MCF 10A (cell line): ENCODE measurements at regions of chr5 and their contacts with region 1.

Region 1: GRCh38 chr5:134370871-134371833 is at the start of gene UBE2B:
- DNase-seq: peak; percentile 100
- H3K4me3 Mint-ChIP-seq: peak within 1 kb of the TSS; percentile 99
- H3K27ac Mint-ChIP-seq: peak within 1 kb of the TSS; percentile 99
- H3K4me1 Mint-ChIP-seq: peaks cover 28% of the 10 kb centered on the region
- H3K27me3 Mint-ChIP-seq: no peaks in the 10 kb centered on the region
- CTCF ChIP-seq: no peak
- total RNA-seq, gene UBE2B: 178 and 186 TPM in 2 replicates

Region 2: GRCh38 chr5:134394932-134395331 is 23.8 kb after region 1 on chr5:
- CTCF ChIA-PET with region 1: interaction called, 6 read pairs
- POLR2A ChIA-PET with region 1: interaction called, 23 read pairs
- intact Hi-C with region 1: no loop called
- DNase-seq: no peak
- H3K4me3 Mint-ChIP-seq: no peak overlapping the region
- H3K27ac Mint-ChIP-seq: no peak overlapping the region
- H3K4me1 Mint-ChIP-seq: peaks cover 12% of the 10 kb centered on the region
- H3K27me3 Mint-ChIP-seq: no peaks in the 10 kb centered on the region
- CTCF ChIP-seq: no peak

Region 3: GRCh38 chr5:134451936-134452505 is 80.9 kb after region 1 on chr5:
- CTCF ChIA-PET with region 1: no interaction called
- POLR2A ChIA-PET with region 1: interaction called, 13 read pairs
- intact Hi-C with region 1: no loop called
- DNase-seq: peak; percentile 94
- H3K4me3 Mint-ChIP-seq: no peak overlapping the region
- H3K27ac Mint-ChIP-seq: no peak overlapping the region
- H3K4me1 Mint-ChIP-seq: peaks cover 24% of the 10 kb centered on the region
- H3K27me3 Mint-ChIP-seq: no peaks in the 10 kb centered on the region
- CTCF ChIP-seq: no peak

Region 4: GRCh38 chr5:134503088-134503946 is 132.2 kb after region 1 on chr5:
- CTCF ChIA-PET with region 1: interaction called, 3 read pairs
- POLR2A ChIA-PET with region 1: interaction called, 72 read pairs
- intact Hi-C with region 1: no loop called
- DNase-seq: peak; percentile 100
- H3K4me3 Mint-ChIP-seq: peak overlapping the region; percentile 10
- H3K27ac Mint-ChIP-seq: peak overlapping the region; percentile 90
- H3K4me1 Mint-ChIP-seq: peaks cover 45% of the 10 kb centered on the region
- H3K27me3 Mint-ChIP-seq: no peaks in the 10 kb centered on the region
- CTCF ChIP-seq: no peak

Region 5: GRCh38 chr5:134527146-134527960 is 156.2 kb after region 1 on chr5:
- CTCF ChIA-PET with region 1: interaction called, 9 read pairs
- POLR2A ChIA-PET with region 1: interaction called, 169 read pairs
- intact Hi-C with region 1: loop called (anchors 1 kb)
- DNase-seq: peak; percentile 93
- H3K4me3 Mint-ChIP-seq: peak overlapping the region; percentile 91
- H3K27ac Mint-ChIP-seq: peak overlapping the region; percentile 49
- H3K4me1 Mint-ChIP-seq: peaks cover 50% of the 10 kb centered on the region
- H3K27me3 Mint-ChIP-seq: no peaks in the 10 kb centered on the region
- CTCF ChIP-seq: peak; percentile 94

Region 6: DNA sequence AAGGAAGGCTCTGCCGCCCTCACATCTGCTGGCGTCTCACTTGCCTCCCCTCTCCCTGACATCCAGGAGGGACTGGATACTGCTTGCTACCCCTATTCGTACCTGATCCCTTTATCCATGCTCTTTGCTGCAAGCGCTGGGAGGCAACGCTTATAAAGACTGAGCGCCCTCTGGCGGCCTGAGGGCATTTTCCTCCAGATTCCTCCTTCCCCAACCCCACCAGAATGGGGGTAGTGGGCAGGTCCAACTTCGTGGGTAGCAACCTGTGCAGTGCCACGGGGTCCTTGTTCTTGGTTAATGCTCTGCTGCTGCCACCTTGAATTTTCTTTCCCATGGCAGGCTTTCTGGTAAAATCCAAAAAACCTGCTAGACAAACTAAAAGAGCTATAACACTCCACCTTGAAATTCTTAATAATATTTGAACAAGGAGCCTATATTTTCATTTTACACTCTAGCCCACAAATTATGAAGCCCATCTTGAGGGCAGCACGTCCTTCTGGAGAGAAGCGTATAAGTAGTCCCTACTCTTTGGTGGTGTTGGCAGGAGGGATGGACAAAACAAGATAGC is 206.7 kb after region 1 on chr5:
- CTCF ChIA-PET with region 1: interaction called, 4 read pairs
- POLR2A ChIA-PET with region 1: no interaction called
- intact Hi-C with region 1: loop called (anchors 2 kb)
- DNase-seq: peak; percentile 88
- H3K4me3 Mint-ChIP-seq: no peak overlapping the region
- H3K27ac Mint-ChIP-seq: peak overlapping the region; percentile 75
- H3K4me1 Mint-ChIP-seq: peaks cover 24% of the 10 kb centered on the region
- H3K27me3 Mint-ChIP-seq: no peaks in the 10 kb centered on the region
- CTCF ChIP-seq: peak; percentile 96

Region 7: GRCh38 chr5:135076051-135076491 is 704.9 kb after region 1 on chr5:
- CTCF ChIA-PET with region 1: no interaction called
- POLR2A ChIA-PET with region 1: no interaction called
- intact Hi-C with region 1: no loop called
- DNase-seq: no peak
- H3K4me3 Mint-ChIP-seq: no peak overlapping the region
- H3K27ac Mint-ChIP-seq: no peak overlapping the region
- H3K4me1 Mint-ChIP-seq: no peaks in the 10 kb centered on the region
- H3K27me3 Mint-ChIP-seq: no peaks in the 10 kb centered on the region
- CTCF ChIP-seq: no peak